B cell (primary cell): ENCODE measurements at regions of chr14 and their contacts with region 1.

Region 1: GRCh38 chr14:95713596-95714371 is at the start of gene TCL1A:
- DNase-seq: peak; percentile 78
- ATAC-seq: peak; percentile 90
- H3K4me3 ChIP-seq: peak within 1 kb of the TSS; percentile 70 to 96 (median 90)
- H3K4me3 Mint-ChIP-seq: peak within 1 kb of the TSS; percentile 95
- H3K27ac ChIP-seq: peak within 1 kb of the TSS; percentile 76 to 81
- H3K27ac Mint-ChIP-seq: peak within 1 kb of the TSS; percentile 96
- H3K4me1 ChIP-seq: peaks cover 28 to 59% of the 10 kb centered on the region in 2 donors
- H3K4me1 Mint-ChIP-seq: peaks cover 58% of the 10 kb centered on the region
- H3K27me3 ChIP-seq: peaks cover 0 to 5% (median 3%) of the 10 kb centered on the region in 4 experiments
- H3K27me3 Mint-ChIP-seq: peaks cover 29% of the 10 kb centered on the region
- CTCF ChIP-seq: peak; percentile 33
- total RNA-seq, gene TCL1A: 272 and 275 TPM in 2 replicates

Region 2: DNA sequence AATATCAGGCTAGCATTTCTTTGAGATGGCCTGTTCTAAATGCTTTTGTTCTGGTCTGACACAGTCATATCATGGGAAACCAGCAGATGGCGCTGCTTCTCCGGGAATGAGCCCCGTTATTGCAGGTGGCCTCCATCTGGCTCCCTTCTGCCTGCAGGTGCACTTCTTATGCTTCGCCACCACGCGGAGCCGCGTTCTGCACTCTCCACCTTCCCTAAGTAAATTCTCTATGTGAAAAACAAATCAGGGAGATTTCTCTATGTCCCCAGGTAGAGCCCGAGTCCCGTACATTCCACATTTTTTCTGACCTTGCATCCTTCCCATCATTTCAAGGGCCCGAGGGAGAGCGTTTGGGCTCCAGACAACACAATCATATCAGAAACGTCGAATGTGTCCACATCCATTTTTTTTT is 152.8 kb before region 1 on chr14:
- CTCF ChIA-PET with region 1: interaction called, 4 read pairs
- POLR2A ChIA-PET with region 1: no interaction called
- intact Hi-C with region 1: loop called (anchors 1 kb)
- DNase-seq: peak; percentile 91
- ATAC-seq: peak; percentile 97
- H3K4me3 ChIP-seq: no peak overlapping the region
- H3K4me3 Mint-ChIP-seq: no peak overlapping the region
- H3K27ac ChIP-seq: no peak overlapping the region
- H3K27ac Mint-ChIP-seq: peak overlapping the region; percentile 4
- H3K4me1 ChIP-seq: peaks cover 0 to 3% of the 10 kb centered on the region in 2 donors
- H3K4me1 Mint-ChIP-seq: peaks cover 4% of the 10 kb centered on the region
- H3K27me3 ChIP-seq: peaks cover 0 to 14% (median 6%) of the 10 kb centered on the region in 4 experiments
- H3K27me3 Mint-ChIP-seq: peaks cover 23% of the 10 kb centered on the region
- CTCF ChIP-seq: peak; percentile 99

Region 3: DNA sequence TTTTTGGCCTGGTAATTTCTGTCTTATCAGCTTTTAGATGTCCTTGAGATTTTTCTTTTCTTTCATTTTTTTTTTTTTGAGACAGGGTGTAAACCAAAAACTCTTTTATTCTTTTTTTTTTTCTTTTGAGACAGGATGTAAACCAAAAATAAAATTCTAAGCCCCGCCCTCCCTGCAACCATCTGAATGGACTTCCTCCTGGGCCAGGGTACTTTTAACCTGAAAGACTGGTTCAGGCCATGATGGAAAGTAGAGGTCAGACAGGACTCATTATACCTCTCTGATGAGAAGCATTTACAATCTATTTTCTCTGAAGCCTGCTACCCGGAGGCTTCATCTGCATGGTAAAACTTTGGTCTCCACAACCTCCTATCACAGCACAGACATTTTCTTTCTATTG is 61.1 kb before region 1 on chr14:
- CTCF ChIA-PET with region 1: no interaction called
- POLR2A ChIA-PET with region 1: no interaction called
- intact Hi-C with region 1: no loop called
- DNase-seq: peak; percentile 18
- ATAC-seq: peak; percentile 61
- H3K4me3 ChIP-seq: peak overlapping the region in 2 of 5 experiments; percentile 15 to 30
- H3K4me3 Mint-ChIP-seq: peak overlapping the region; percentile 59
- H3K27ac ChIP-seq: peak overlapping the region; percentile 68 to 75
- H3K27ac Mint-ChIP-seq: peak overlapping the region; percentile 82
- H3K4me1 ChIP-seq: peaks cover 55 to 59% of the 10 kb centered on the region in 2 donors
- H3K4me1 Mint-ChIP-seq: peaks cover 68% of the 10 kb centered on the region
- H3K27me3 ChIP-seq: no peaks in the 10 kb centered on the region
- H3K27me3 Mint-ChIP-seq: peaks cover 14% of the 10 kb centered on the region
- CTCF ChIP-seq: no peak

Region 4: GRCh38 chr14:95697764-95698163 is 16.0 kb before region 1 on chr14:
- CTCF ChIA-PET with region 1: interaction called, 12 read pairs
- POLR2A ChIA-PET with region 1: interaction called, 19 read pairs
- intact Hi-C with region 1: loop called (anchors 2 kb)
- DNase-seq: peak; percentile 76
- ATAC-seq: peak; percentile 64
- H3K4me3 ChIP-seq: peak overlapping the region in 3 of 5 experiments; percentile 9 to 56 (median 16)
- H3K4me3 Mint-ChIP-seq: peak overlapping the region; percentile 81
- H3K27ac ChIP-seq: peak overlapping the region; percentile 87 to 94
- H3K27ac Mint-ChIP-seq: peak overlapping the region; percentile 95
- H3K4me1 ChIP-seq: peaks cover 100% of the 10 kb centered on the region in 2 donors
- H3K4me1 Mint-ChIP-seq: peaks cover 83% of the 10 kb centered on the region
- H3K27me3 ChIP-seq: no peaks in the 10 kb centered on the region
- H3K27me3 Mint-ChIP-seq: peaks cover 34% of the 10 kb centered on the region
- CTCF ChIP-seq: peak; percentile 19

Region 5: DNA sequence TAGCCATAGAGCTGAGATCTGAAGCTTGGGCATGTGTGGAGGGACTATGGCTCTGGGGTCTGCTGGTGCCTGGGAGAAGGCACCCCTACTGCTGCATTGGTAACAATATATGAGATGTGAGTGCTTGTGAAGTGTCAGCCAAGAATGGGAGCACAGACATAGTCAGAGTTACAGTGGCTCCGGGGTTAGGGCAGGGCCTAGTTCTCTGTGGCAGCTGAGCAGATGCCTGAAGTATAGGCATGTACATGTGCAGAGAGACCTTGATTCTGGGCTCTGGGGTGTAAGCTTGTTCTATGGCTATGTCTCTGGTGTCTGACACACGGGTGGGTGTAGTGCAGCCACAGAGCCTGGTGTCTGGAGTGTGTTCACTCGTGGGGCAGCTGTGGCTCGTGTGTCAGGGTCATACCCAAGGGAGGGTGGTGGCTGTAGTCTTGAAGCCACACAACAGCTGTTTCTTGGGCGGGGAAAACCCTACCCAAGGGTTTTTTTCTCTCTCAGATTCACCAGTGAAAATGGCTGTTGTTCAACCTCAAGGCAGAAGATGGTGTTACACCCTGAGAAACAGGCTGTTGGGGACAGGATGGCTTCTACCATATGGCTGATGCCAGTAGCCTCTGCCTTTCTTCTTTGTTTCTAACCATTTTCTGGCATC is 12.0 kb after region 1 on chr14:
- CTCF ChIA-PET with region 1: interaction called, 10 read pairs
- POLR2A ChIA-PET with region 1: interaction called, 9 read pairs
- intact Hi-C with region 1: no loop called
- DNase-seq: peak; percentile 78
- ATAC-seq: peak; percentile 91
- H3K4me3 ChIP-seq: peak overlapping the region in 4 of 5 experiments; percentile 3 to 45 (median 32)
- H3K4me3 Mint-ChIP-seq: peak overlapping the region; percentile 68
- H3K27ac ChIP-seq: peak overlapping the region; percentile 59 to 74
- H3K27ac Mint-ChIP-seq: peak overlapping the region; percentile 90
- H3K4me1 ChIP-seq: peaks cover 66 to 69% of the 10 kb centered on the region in 2 donors
- H3K4me1 Mint-ChIP-seq: peaks cover 67% of the 10 kb centered on the region
- H3K27me3 ChIP-seq: no peaks in the 10 kb centered on the region
- H3K27me3 Mint-ChIP-seq: peaks cover 30% of the 10 kb centered on the region
- CTCF ChIP-seq: no peak

Region 6: DNA sequence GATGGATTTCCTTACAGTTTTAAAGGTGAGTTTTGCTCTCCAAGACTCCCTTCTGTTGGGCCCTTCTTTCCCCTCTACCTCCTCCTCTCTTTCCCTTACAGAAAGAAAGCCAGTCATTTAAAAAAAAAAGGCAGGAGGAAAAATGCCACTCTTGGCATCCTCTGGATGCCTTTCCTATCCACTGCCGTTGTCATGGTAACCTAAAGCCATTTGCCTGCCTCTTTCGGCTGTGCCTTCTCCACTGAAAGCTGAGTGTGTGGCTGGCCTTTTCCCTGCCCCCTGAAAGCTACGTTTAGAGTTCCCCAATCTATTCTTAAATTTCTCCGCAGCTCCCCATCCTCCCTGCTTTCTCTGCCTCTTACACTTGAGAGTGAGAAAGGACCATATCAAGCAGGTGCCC is 229.9 kb after region 1 on chr14:
- CTCF ChIA-PET with region 1: no interaction called
- POLR2A ChIA-PET with region 1: no interaction called
- intact Hi-C with region 1: no loop called
- DNase-seq: no peak
- ATAC-seq: no peak
- H3K4me3 ChIP-seq: no peak overlapping the region
- H3K4me3 Mint-ChIP-seq: no peak overlapping the region
- H3K27ac ChIP-seq: no peak overlapping the region
- H3K27ac Mint-ChIP-seq: no peak overlapping the region
- H3K4me1 ChIP-seq: no peaks in the 10 kb centered on the region
- H3K4me1 Mint-ChIP-seq: no peaks in the 10 kb centered on the region
- H3K27me3 ChIP-seq: peaks cover 0 to 6% (median 0%) of the 10 kb centered on the region in 4 experiments
- H3K27me3 Mint-ChIP-seq: peaks cover 16% of the 10 kb centered on the region
- CTCF ChIP-seq: no peak

Region 7: GRCh38 chr14:96189281-96189711 is 475.5 kb after region 1 on chr14:
- CTCF ChIA-PET with region 1: no interaction called
- POLR2A ChIA-PET with region 1: no interaction called
- intact Hi-C with region 1: no loop called
- DNase-seq: no peak
- ATAC-seq: no peak
- H3K4me3 ChIP-seq: no peak overlapping the region
- H3K4me3 Mint-ChIP-seq: no peak overlapping the region
- H3K27ac ChIP-seq: no peak overlapping the region
- H3K27ac Mint-ChIP-seq: no peak overlapping the region
- H3K4me1 ChIP-seq: no peaks in the 10 kb centered on the region
- H3K4me1 Mint-ChIP-seq: no peaks in the 10 kb centered on the region
- H3K27me3 ChIP-seq: peaks cover 0 to 5% (median 0%) of the 10 kb centered on the region in 4 experiments
- H3K27me3 Mint-ChIP-seq: peaks cover 22% of the 10 kb centered on the region
- CTCF ChIP-seq: no peak